ENCODE measurements at regions of chr6 and their contacts with region 1.

Region 1: DNA sequence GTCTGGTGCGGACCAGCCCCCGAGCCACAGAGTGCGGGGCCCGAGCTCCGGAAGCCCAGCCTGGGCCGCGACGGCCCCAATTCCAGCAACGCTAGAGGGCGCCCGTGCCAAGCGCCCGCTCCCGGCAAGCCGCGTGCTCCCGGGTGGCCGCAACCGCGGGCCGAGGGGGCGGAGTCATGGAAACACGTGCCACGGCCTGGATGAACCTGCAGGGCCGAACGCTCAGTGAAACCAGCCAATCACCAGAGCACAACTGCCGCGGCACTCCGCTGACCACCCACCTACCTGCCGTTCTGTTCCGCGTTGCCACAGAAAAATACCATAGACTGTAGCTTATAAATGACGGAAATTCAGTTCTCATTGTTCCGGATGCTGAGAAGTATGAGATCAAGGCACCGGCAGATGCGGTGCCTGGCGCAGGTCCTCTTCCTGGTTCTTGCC is 85.7 kb upstream of the FOXC1 start:
- DNase-seq: peak; percentile 90
- ATAC-seq: peak; percentile 76
- H3K4me3 Mint-ChIP-seq: peak overlapping the region; percentile 56
- H3K27ac Mint-ChIP-seq: peak overlapping the region; percentile 78
- H3K4me1 Mint-ChIP-seq: peaks cover 48% of the 10 kb centered on the region
- H3K27me3 Mint-ChIP-seq: peaks cover 7% of the 10 kb centered on the region

Region 2: DNA sequence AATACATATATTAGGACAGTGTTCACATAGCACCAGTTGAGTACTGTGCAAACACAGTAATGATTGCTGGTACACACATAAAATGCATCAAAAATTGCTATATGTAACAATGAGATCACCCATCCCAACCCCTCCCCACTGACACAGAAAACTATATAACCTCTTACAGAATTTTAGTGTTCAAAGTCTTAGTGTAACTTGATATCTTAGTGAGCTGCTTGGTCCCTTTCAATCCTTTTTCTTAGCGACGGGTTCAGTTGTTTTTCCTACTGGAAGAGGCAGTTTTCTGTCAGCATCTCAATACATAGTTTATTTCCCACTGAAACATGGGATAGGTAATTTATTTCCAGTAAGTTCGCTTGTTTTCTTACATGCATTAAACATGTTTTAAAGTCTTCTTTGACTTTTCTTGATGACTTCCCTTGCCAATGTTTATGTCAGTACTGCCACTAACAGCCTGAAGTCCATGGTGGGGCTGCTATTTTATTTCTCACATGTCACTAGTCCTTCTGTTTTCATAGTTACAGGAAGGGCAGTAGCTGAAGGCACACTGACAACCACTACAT is 10.8 kb before region 1 on chr6:
- CTCF ChIA-PET with region 1: interaction called, 11 read pairs
- POLR2A ChIA-PET with region 1: no interaction called
- intact Hi-C with region 1: no loop called
- DNase-seq: no peak
- ATAC-seq: no peak
- H3K4me3 Mint-ChIP-seq: no peak overlapping the region
- H3K27ac Mint-ChIP-seq: no peak overlapping the region
- H3K4me1 Mint-ChIP-seq: no peaks in the 10 kb centered on the region
- H3K27me3 Mint-ChIP-seq: peaks cover 6% of the 10 kb centered on the region

Region 3: DNA sequence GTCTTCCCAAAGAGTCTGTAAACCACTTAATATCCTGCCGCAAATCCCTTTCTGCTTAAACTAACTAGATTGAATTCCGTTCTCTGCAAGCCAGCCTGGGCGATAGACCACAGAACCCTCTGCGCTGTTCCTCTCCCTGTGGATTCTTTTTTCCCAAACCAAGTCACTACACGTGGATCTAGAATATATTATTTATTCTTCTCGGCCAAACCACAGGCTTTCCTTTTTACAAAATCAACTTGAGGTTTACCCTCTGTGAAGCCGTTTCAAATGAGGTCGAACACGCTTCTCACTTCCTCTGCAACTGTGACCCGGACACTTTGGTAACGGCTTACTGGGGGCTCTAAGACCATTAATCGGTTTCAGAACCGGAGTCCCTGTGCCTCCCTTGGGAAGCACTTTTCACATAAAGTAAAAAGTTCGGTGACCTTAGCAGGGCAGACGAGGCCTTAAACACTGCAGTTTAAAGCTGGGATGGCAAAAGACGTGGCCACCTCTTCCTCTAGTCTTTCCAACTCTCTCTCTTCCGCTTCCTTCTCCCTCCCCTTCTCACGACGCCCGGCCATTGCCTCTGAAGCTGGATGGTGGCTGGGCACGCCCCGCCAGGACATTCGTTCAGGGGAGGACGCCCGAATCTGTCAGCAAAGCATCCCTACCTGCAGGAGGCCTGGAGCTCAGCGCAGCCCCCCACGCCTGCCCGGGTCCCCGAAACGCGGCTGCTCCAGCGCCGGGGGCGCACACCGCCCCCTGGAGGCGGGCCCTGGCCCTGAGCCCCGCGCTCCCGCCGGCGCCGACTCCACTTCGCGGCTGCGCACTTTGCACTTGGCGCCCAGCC is 30.6 kb after region 1 on chr6:
- CTCF ChIA-PET with region 1: interaction called, 20 read pairs
- POLR2A ChIA-PET with region 1: interaction called, 3 read pairs
- intact Hi-C with region 1: loop called (anchors 1 kb)
- DNase-seq: peak; percentile 87
- ATAC-seq: peak; percentile 92
- H3K4me3 Mint-ChIP-seq: peak overlapping the region; percentile 81
- H3K27ac Mint-ChIP-seq: peak overlapping the region; percentile 97
- H3K4me1 Mint-ChIP-seq: peaks cover 29% of the 10 kb centered on the region
- H3K27me3 Mint-ChIP-seq: no peaks in the 10 kb centered on the region